Activated CD4-positive, alpha-beta T cell treated with anti-CD3 and anti-CD28 coated beads for 36 hours (primary cell): ENCODE measurements at regions of chr16 and their contacts with region 1.

Region 1: GRCh38 chr16:21952793-21953540 is at the start of gene UQCRC2:
- DNase-seq: peak; percentile 92
- ATAC-seq: peak; percentile 93
- H3K4me3 Mint-ChIP-seq: peak within 1 kb of the TSS; percentile 98
- H3K27ac Mint-ChIP-seq: peak within 1 kb of the TSS; percentile 100
- H3K4me1 Mint-ChIP-seq: peaks cover 58% of the 10 kb centered on the region
- H3K27me3 Mint-ChIP-seq: no peaks in the 10 kb centered on the region
- total RNA-seq, gene UQCRC2: 321 to 367 TPM

Region 2: GRCh38 chr16:21646721-21647561 is 306.0 kb before region 1 on chr16:
- CTCF ChIA-PET with region 1: no interaction called
- POLR2A ChIA-PET with region 1: interaction called, 5 read pairs
- intact Hi-C with region 1: loop called in 1 of 2 experiments (anchors 5 kb)
- DNase-seq: peak; percentile 89
- ATAC-seq: peak; percentile 89
- H3K4me3 Mint-ChIP-seq: peak overlapping the region; percentile 54
- H3K27ac Mint-ChIP-seq: peak overlapping the region; percentile 92
- H3K4me1 Mint-ChIP-seq: peaks cover 61% of the 10 kb centered on the region
- H3K27me3 Mint-ChIP-seq: no peaks in the 10 kb centered on the region

Region 3: GRCh38 chr16:21982108-21982507 is 29.1 kb after region 1 on chr16:
- CTCF ChIA-PET with region 1: interaction called, 4 read pairs
- POLR2A ChIA-PET with region 1: no interaction called
- intact Hi-C with region 1: loop called in 1 of 2 experiments (anchors 2 kb)
- DNase-seq: no peak
- ATAC-seq: no peak
- H3K4me3 Mint-ChIP-seq: no peak overlapping the region
- H3K27ac Mint-ChIP-seq: peak overlapping the region; percentile 27
- H3K4me1 Mint-ChIP-seq: no peaks in the 10 kb centered on the region
- H3K27me3 Mint-ChIP-seq: no peaks in the 10 kb centered on the region

Region 4: DNA sequence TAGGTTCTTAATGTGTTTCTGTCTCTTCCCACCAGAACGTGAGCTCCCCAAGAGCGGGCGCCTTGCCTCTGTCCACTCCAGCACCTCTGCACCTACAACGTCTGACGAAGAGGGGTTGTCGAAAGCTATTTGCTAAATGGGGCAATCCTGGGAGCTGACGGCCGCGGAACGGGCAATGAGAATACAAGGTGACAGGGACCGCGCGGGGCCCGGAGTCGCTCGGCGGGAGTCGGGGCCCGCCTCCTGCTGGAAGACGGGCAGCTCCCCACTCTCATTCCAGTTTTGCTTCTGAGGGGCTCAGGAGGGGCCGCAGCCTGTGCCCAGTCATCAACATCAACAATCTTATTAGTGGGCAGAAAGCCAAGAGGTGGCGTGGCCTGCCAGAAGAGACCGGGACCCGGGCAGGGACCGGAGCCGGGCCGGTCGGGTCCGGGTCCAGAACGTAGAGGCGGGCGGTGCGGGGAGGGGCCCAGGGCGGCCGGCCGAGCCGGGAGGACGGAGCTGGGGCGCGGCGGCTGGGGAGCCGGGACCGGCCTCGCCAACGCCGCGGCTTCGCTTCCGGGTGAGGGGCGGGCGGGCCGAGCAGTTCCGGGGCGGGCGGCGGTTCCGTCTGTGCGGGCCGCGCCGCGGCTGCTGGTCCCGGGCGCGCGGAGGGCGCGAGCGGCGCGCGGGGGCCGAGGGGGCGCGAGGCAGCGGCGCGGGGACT is 54.7 kb after region 1 on chr16 and contains the start of gene MOSMO:
- CTCF ChIA-PET with region 1: interaction called, 4 read pairs
- POLR2A ChIA-PET with region 1: no interaction called
- intact Hi-C with region 1: loop called in 1 of 2 experiments (anchors 2 kb)
- DNase-seq: peak; percentile 81
- ATAC-seq: peak; percentile 89
- H3K4me3 Mint-ChIP-seq: peak within 1 kb of the TSS; percentile 84
- H3K27ac Mint-ChIP-seq: peak within 1 kb of the TSS; percentile 79
- H3K4me1 Mint-ChIP-seq: peaks cover 42% of the 10 kb centered on the region
- H3K27me3 Mint-ChIP-seq: no peaks in the 10 kb centered on the region
- total RNA-seq, gene MOSMO: 7.7 to 8.0 TPM

Region 5: GRCh38 chr16:22413819-22414218 is 460.9 kb after region 1 on chr16:
- CTCF ChIA-PET with region 1: no interaction called
- POLR2A ChIA-PET with region 1: no interaction called
- intact Hi-C with region 1: no loop called
- DNase-seq: no peak
- ATAC-seq: no peak
- H3K4me3 Mint-ChIP-seq: no peak overlapping the region
- H3K27ac Mint-ChIP-seq: no peak overlapping the region
- H3K4me1 Mint-ChIP-seq: no peaks in the 10 kb centered on the region
- H3K27me3 Mint-ChIP-seq: no peaks in the 10 kb centered on the region